Transverse colon (tissue), 4 donors: ENCODE measurements at regions of chr14 and their contacts with region 1.

Region 1: DNA sequence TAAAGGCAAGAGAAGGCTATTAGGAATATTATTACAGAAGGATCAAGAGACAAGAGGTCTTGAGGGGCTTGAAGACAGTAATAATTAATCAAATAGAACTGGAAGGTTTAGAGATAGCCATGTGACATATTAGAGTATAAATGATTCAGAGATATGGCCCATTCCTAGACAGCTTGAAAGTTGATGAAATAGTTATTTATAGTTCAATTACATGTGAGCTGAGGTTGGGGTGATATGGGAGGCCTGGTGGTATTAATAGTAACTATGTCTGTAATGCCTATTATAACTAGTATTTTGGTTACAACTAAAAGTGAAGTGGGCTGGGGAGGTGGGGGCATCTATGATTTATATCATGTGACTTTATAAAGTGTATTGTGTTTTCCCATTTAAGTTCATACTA is 14.1 kb upstream of the MIS18BP1 start:
- DNase-seq: no peak
- H3K4me3 ChIP-seq: no peak overlapping the region
- H3K27ac ChIP-seq: no peak overlapping the region
- H3K4me1 ChIP-seq: no peaks in the 10 kb centered on the region
- H3K27me3 ChIP-seq: no peaks in the 10 kb centered on the region
- CTCF ChIP-seq: no peak
- EP300 ChIP-seq: no peak
- POLR2A ChIP-seq: no peak

Region 2: DNA sequence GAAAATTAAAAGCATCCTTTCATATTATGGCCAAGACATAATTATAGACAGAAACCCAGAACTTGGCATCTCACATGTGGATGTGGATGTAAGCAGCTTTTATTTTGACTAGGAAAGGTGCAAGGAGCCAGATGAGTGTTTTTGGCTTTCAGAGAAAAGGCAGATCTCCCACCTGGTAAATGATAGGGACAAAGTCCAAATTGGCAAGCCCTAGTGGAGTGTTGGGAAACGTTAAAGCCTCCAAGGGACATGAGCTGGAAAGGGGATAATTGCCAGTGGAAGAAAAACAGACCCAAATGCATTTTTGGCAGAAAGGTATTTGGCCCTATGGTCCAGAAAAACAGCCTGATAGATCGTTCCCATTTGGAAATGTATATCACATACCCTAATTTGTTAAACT is 365.4 kb before region 1 on chr14:
- in situ Hi-C with region 1: loop called (anchors 10 to 25 kb)
- intact Hi-C with region 1: no loop called
- DNase-seq: no peak
- H3K4me3 ChIP-seq: no peak overlapping the region
- H3K27ac ChIP-seq: no peak overlapping the region
- H3K4me1 ChIP-seq: peaks cover 0 to 15% (median 0%) of the 10 kb centered on the region in 4 donors
- H3K27me3 ChIP-seq: no peaks in the 10 kb centered on the region
- CTCF ChIP-seq: no peak
- EP300 ChIP-seq: no peak
- POLR2A ChIP-seq: no peak

Region 3: DNA sequence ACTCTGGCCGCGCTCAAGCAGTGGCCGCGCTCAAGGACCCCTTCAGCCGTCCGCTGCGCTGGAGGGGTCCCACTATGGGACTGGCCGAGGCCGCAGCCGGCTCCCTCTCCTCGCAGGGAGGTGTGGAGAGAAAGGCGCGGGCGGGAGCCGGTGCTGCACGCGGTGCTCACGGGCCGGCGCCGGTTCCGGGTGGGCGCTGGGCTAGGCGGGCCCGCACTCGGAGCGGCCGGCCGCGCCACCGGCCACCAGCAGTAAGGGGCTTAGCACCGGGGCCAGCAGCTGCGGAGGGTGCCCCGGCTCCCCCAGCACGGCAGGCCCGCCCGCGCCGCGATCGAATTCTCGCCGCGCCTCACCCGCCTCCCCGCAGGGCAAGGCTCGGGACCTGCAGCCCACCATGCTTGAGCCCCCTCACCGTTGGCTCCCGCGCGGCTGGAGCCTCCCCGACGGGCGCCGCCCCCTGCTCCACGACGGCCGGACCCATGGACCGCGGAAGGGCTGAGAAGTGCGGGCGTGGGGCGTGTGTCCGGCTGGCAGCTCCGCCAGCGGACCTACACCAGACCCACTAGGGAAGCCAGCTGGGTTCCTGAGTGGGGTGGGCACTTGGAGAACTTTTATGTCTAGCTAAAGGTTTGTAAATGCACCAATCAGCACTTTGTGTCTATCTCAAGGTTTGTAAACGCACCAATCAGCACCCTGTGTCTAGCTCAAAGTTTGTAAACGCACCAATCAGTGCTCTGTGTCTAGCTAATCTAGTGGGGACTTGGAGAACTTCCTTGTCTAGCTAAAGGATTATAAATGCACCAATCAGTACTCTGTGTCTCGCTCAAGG is 354.8 kb before region 1 on chr14:
- in situ Hi-C with region 1: loop called (anchors 10 to 25 kb)
- intact Hi-C with region 1: loop called (anchors 10 kb)
- DNase-seq: no peak
- H3K4me3 ChIP-seq: peak overlapping the region; percentile 28 to 56 (median 38)
- H3K27ac ChIP-seq: no peak overlapping the region
- H3K4me1 ChIP-seq: peaks cover 0 to 12% (median 0%) of the 10 kb centered on the region in 4 donors
- H3K27me3 ChIP-seq: peaks cover 35% of the 10 kb centered on the region
- CTCF ChIP-seq: no peak
- EP300 ChIP-seq: no peak
- POLR2A ChIP-seq: no peak

Region 4: DNA sequence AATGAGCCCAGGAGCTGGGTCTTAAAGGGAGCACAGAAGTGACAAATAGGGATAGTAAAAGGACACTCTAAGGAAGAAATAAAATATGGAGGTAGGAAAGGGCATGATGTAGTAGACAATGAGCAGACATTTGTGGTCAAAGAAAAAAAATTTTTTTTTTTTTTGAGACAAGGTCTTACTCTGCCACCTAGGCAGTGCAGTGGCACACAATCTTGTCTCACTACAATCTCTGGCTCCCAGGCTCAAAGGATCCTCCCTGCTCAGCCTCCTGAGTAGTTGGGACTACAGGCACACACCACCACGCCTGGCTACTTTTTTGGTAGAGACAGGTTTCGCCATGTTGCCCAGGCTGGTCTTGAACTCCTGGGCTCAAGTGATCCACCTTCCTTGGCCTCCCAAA is 141.3 kb before region 1 on chr14:
- in situ Hi-C with region 1: no loop called
- intact Hi-C with region 1: no loop called
- DNase-seq: no peak
- H3K4me3 ChIP-seq: no peak overlapping the region
- H3K27ac ChIP-seq: no peak overlapping the region
- H3K4me1 ChIP-seq: no peaks in the 10 kb centered on the region
- H3K27me3 ChIP-seq: no peaks in the 10 kb centered on the region
- CTCF ChIP-seq: no peak
- EP300 ChIP-seq: no peak
- POLR2A ChIP-seq: no peak

Region 5: GRCh38 chr14:45144658-45145057 is 122.4 kb before region 1 on chr14:
- in situ Hi-C with region 1: loop called in 1 of 4 experiments (anchors 10 kb)
- intact Hi-C with region 1: no loop called
- DNase-seq: no peak
- H3K4me3 ChIP-seq: no peak overlapping the region
- H3K27ac ChIP-seq: no peak overlapping the region
- H3K4me1 ChIP-seq: no peaks in the 10 kb centered on the region
- H3K27me3 ChIP-seq: no peaks in the 10 kb centered on the region
- CTCF ChIP-seq: no peak
- EP300 ChIP-seq: no peak
- POLR2A ChIP-seq: no peak